ENCODE measurements at regions of chr9 and their contacts with region 1.

Region 1: GRCh38 chr9:2014696-2015580 is at the start of gene SMARCA2:
- DNase-seq: peak; percentile 96 to 98 (median 97)
- ATAC-seq: peak; percentile 79
- H3K4me3 ChIP-seq: peak within 1 kb of the TSS; percentile 78 to 97
- H3K4me3 Mint-ChIP-seq: peak within 1 kb of the TSS; percentile 100
- H3K27ac ChIP-seq: peak within 1 kb of the TSS; percentile 91 to 94
- H3K27ac Mint-ChIP-seq: peak within 1 kb of the TSS; percentile 100
- H3K4me1 ChIP-seq: peaks cover 18% of the 10 kb centered on the region
- H3K4me1 Mint-ChIP-seq: peaks cover 35% of the 10 kb centered on the region
- H3K27me3 ChIP-seq: no peaks in the 10 kb centered on the region
- H3K27me3 Mint-ChIP-seq: no peaks in the 10 kb centered on the region
- CTCF ChIP-seq: no peak
- total RNA-seq, gene SMARCA2: 198 to 215 TPM

Region 2: GRCh38 chr9:278651-279050 is 1736.3 kb before region 1 on chr9:
- CTCF ChIA-PET with region 1: no interaction called
- POLR2A ChIA-PET with region 1: no interaction called
- intact Hi-C with region 1: loop called in 1 of 2 experiments (anchors 5 kb)
- DNase-seq: peak in 6 of 9 experiments; percentile 28 to 79 (median 50)
- ATAC-seq: peak; percentile 48
- H3K4me3 ChIP-seq: peak overlapping the region in 1 of 2 experiments; percentile 10
- H3K4me3 Mint-ChIP-seq: no peak overlapping the region
- H3K27ac ChIP-seq: peak overlapping the region; percentile 78 to 94
- H3K27ac Mint-ChIP-seq: no peak overlapping the region
- H3K4me1 ChIP-seq: peaks cover 75% of the 10 kb centered on the region
- H3K4me1 Mint-ChIP-seq: peaks cover 49% of the 10 kb centered on the region
- H3K27me3 ChIP-seq: no peaks in the 10 kb centered on the region
- H3K27me3 Mint-ChIP-seq: no peaks in the 10 kb centered on the region
- CTCF ChIP-seq: no peak

Region 3: DNA sequence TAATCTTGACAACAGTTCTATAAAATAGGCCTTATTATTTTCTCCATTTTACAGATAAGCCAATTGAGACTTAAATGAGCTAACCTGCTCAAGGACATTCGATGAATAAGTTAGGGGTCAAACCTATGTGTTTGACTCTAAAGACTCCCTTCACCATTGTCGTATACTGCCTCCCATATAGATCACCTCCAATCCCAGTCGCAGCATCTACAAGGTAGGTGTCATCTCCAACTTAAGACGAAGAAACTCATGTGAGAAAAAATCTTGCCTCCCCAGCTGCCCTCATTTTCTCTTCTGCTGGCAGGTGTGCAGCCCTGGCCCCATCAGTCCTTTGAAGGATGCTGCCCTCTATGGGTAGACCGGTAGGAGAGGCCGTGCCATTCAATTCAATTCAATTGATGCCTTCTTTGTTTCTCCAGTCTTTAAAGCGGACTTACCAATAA is 75.0 kb before region 1 on chr9:
- CTCF ChIA-PET with region 1: no interaction called
- POLR2A ChIA-PET with region 1: interaction called, 3 read pairs
- intact Hi-C with region 1: loop called in 1 of 2 experiments (anchors 10 kb)
- DNase-seq: peak in 4 of 9 experiments; percentile 8 to 51 (median 30)
- ATAC-seq: peak; percentile 51
- H3K4me3 ChIP-seq: no peak overlapping the region
- H3K4me3 Mint-ChIP-seq: no peak overlapping the region
- H3K27ac ChIP-seq: no peak overlapping the region
- H3K27ac Mint-ChIP-seq: no peak overlapping the region
- H3K4me1 ChIP-seq: no peaks in the 10 kb centered on the region
- H3K4me1 Mint-ChIP-seq: peaks cover 2% of the 10 kb centered on the region
- H3K27me3 ChIP-seq: no peaks in the 10 kb centered on the region
- H3K27me3 Mint-ChIP-seq: peaks cover 5% of the 10 kb centered on the region
- CTCF ChIP-seq: peak; percentile 37

Region 4: GRCh38 chr9:1989500-1989899 is 25.4 kb before region 1 on chr9:
- CTCF ChIA-PET with region 1: no interaction called
- POLR2A ChIA-PET with region 1: no interaction called
- intact Hi-C with region 1: no loop called
- DNase-seq: no peak
- ATAC-seq: no peak
- H3K4me3 ChIP-seq: no peak overlapping the region
- H3K4me3 Mint-ChIP-seq: no peak overlapping the region
- H3K27ac ChIP-seq: no peak overlapping the region
- H3K27ac Mint-ChIP-seq: no peak overlapping the region
- H3K4me1 ChIP-seq: no peaks in the 10 kb centered on the region
- H3K4me1 Mint-ChIP-seq: no peaks in the 10 kb centered on the region
- H3K27me3 ChIP-seq: no peaks in the 10 kb centered on the region
- H3K27me3 Mint-ChIP-seq: peaks cover 9% of the 10 kb centered on the region
- CTCF ChIP-seq: no peak

Region 5: GRCh38 chr9:2043881-2044462 is 29.0 kb after region 1 on chr9:
- CTCF ChIA-PET with region 1: no interaction called
- POLR2A ChIA-PET with region 1: interaction called, 11 read pairs
- intact Hi-C with region 1: no loop called
- DNase-seq: no peak
- ATAC-seq: no peak
- H3K4me3 ChIP-seq: no peak overlapping the region
- H3K4me3 Mint-ChIP-seq: no peak overlapping the region
- H3K27ac ChIP-seq: peak overlapping the region in 1 of 2 experiments; percentile 10
- H3K27ac Mint-ChIP-seq: peak overlapping the region; percentile 80
- H3K4me1 ChIP-seq: peaks cover 11% of the 10 kb centered on the region
- H3K4me1 Mint-ChIP-seq: peaks cover 58% of the 10 kb centered on the region
- H3K27me3 ChIP-seq: no peaks in the 10 kb centered on the region
- H3K27me3 Mint-ChIP-seq: no peaks in the 10 kb centered on the region
- CTCF ChIP-seq: no peak

Region 6: GRCh38 chr9:2570615-2571479 is 555.9 kb after region 1 on chr9:
- CTCF ChIA-PET with region 1: no interaction called
- POLR2A ChIA-PET with region 1: no interaction called
- intact Hi-C with region 1: no loop called
- DNase-seq: peak in 6 of 9 experiments; percentile 3 to 65 (median 30)
- ATAC-seq: no peak
- H3K4me3 ChIP-seq: no peak overlapping the region
- H3K4me3 Mint-ChIP-seq: no peak overlapping the region
- H3K27ac ChIP-seq: no peak overlapping the region
- H3K27ac Mint-ChIP-seq: no peak overlapping the region
- H3K4me1 ChIP-seq: no peaks in the 10 kb centered on the region
- H3K4me1 Mint-ChIP-seq: no peaks in the 10 kb centered on the region
- H3K27me3 ChIP-seq: peaks cover 0 to 3% of the 10 kb centered on the region in 2 experiments
- H3K27me3 Mint-ChIP-seq: peaks cover 3% of the 10 kb centered on the region
- CTCF ChIP-seq: no peak

Region 7: DNA sequence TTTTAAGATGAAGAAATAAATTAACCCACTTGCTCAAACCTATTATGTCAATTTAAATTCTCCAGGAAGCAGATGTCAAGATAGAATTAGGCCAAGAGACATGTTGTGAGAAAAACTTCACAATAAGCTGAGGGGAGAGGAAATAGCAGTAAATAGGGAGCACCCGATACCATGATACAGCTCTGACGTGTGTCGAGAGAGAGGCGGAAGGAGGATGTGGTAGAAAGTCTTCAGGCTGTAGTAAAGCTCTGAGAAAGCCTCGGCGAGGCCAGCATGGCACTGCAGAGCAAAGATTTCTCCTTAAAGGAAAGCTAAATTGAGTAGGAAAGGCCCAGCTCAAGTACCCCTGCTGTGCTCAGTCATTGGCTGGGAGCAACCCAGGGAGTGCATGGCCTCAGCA is 835.0 kb after region 1 on chr9:
- CTCF ChIA-PET with region 1: no interaction called
- POLR2A ChIA-PET with region 1: no interaction called
- intact Hi-C with region 1: loop called in 1 of 2 experiments (anchors 10 kb)
- DNase-seq: peak in 2 of 9 experiments; percentile 11 to 42
- ATAC-seq: peak; percentile 59
- H3K4me3 ChIP-seq: no peak overlapping the region
- H3K4me3 Mint-ChIP-seq: no peak overlapping the region
- H3K27ac ChIP-seq: no peak overlapping the region
- H3K27ac Mint-ChIP-seq: no peak overlapping the region
- H3K4me1 ChIP-seq: peaks cover 8% of the 10 kb centered on the region
- H3K4me1 Mint-ChIP-seq: peaks cover 11% of the 10 kb centered on the region
- H3K27me3 ChIP-seq: no peaks in the 10 kb centered on the region
- H3K27me3 Mint-ChIP-seq: peaks cover 14% of the 10 kb centered on the region
- CTCF ChIP-seq: no peak

Measured in CD8-positive, alpha-beta T cell (primary cell).